Activated T-helper 1 cell treated with anti-CD3 and anti-CD28 coated beads, Interleukin-12 subunit alpha, Interleukin-12 subunit beta, Interleukin-2, Interleukin-4 antibody, amounts not matched to agents 30 ng/mL and 10 ng/mL and 1 ng/mL, durations not matched to agents 14 hours and 24 hours and 36 hours (primary cell): ENCODE measurements at regions of chr6 and their contacts with region 1.

Region 1: GRCh38 chr6:142810952-142811514 is 133.9 kb downstream of the HIVEP2 start:
- DNase-seq: peak; percentile 15
- H3K4me3 Mint-ChIP-seq: peak overlapping the region; percentile 3
- H3K27ac Mint-ChIP-seq: peak overlapping the region; percentile 77
- H3K4me1 Mint-ChIP-seq: peaks cover 56% of the 10 kb centered on the region
- H3K27me3 Mint-ChIP-seq: no peaks in the 10 kb centered on the region

Region 2: DNA sequence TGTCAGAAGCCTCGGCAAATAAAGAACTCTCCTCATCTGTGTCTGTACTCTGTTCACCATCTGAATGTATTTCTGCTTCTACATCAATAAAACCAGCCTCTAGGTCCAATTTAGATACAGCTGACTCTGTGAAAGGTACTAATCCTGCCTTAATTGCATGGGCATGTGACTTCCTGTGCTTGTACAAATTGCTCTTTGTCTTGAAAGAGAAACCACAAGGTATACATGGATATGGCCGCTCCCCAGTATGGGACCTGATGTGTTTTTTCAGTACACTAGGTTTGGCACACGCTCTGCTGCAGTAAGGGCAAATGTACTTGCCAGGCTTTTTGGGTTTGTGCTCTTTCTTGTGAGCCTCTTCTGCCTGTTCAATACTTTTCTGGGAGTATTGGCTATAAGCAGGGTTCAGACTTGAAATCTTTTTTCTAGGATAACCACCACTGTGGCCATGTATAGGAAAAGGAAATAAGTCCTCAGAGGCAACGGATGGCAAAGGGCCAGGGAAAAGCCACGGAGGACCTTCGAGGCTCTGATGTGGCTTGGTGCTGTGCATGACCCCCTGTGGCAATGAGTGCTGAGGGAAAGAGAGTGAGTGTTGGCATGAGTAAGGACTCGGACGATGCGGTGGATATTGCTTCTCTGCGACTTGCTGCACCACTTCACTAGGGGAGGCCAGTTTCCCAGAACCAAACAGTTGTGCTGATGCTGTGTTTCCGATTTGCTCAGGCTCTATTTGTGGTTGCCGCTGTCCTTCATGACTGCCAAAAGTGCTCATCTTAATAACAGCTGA is 37.0 kb before region 1 on chr6:
- intact Hi-C with region 1: loop called (anchors 5 kb)
- DNase-seq: no peak
- H3K4me3 Mint-ChIP-seq: no peak overlapping the region
- H3K27ac Mint-ChIP-seq: peak overlapping the region; percentile 80
- H3K4me1 Mint-ChIP-seq: peaks cover 44% of the 10 kb centered on the region
- H3K27me3 Mint-ChIP-seq: no peaks in the 10 kb centered on the region

Region 3: GRCh38 chr6:142850679-142851423 is 39.8 kb after region 1 on chr6:
- intact Hi-C with region 1: loop called (anchors 2 kb)
- DNase-seq: peak; percentile 41
- H3K4me3 Mint-ChIP-seq: peak overlapping the region; percentile 40
- H3K27ac Mint-ChIP-seq: peak overlapping the region; percentile 89
- H3K4me1 Mint-ChIP-seq: peaks cover 91% of the 10 kb centered on the region
- H3K27me3 Mint-ChIP-seq: no peaks in the 10 kb centered on the region

Region 4: DNA sequence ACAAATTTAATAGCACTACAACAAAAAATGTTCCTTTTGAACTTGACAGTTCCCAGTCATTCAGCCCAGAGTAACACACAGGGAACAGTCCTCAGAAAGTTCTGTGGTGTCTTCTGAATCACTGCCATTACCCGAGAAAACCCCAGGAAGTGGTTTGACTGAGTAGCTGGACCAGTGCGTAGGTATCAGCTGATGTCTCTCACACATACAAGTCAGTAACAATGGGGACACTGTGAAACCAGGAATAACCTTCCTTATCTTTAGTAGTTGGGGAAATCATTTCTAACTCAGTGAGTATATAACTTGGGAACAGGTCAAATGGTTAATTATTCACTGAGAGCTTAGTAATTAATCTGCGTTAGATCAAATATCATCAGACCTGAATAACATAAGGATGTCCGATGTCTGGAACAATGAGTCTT is 60.9 kb after region 1 on chr6:
- intact Hi-C with region 1: loop called (anchors 5 kb)
- DNase-seq: peak; percentile 55
- H3K4me3 Mint-ChIP-seq: peak overlapping the region; percentile 40
- H3K27ac Mint-ChIP-seq: peak overlapping the region; percentile 78
- H3K4me1 Mint-ChIP-seq: peaks cover 86% of the 10 kb centered on the region
- H3K27me3 Mint-ChIP-seq: no peaks in the 10 kb centered on the region

Region 5: DNA sequence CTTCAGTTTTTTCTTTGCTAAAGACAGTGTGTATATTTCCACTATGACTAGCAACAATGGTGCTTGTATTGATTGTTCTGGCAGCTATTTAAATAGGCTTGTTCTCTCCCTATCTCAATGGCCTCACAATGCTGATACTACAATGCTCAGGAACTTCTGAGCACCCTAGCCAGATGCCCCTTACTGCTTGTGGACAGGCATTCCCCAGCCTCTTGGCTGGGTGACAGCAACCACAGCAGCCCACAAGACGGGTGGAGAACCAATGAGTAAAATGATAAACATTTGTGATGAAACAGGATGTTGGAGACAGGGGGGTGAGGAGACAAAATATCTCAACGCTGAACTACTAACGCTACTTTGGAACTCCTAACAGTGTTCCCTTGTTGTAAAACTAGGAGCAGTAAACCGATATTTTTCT is 91.6 kb after region 1 on chr6:
- intact Hi-C with region 1: loop called (anchors 1 kb)
- DNase-seq: peak; percentile 76
- H3K4me3 Mint-ChIP-seq: peak overlapping the region; percentile 49
- H3K27ac Mint-ChIP-seq: peak overlapping the region; percentile 91
- H3K4me1 Mint-ChIP-seq: peaks cover 63% of the 10 kb centered on the region
- H3K27me3 Mint-ChIP-seq: no peaks in the 10 kb centered on the region